Esophagus muscularis mucosa (tissue), 4 donors: ENCODE measurements at regions of chr19 and their contacts with region 1.

Region 1: DNA sequence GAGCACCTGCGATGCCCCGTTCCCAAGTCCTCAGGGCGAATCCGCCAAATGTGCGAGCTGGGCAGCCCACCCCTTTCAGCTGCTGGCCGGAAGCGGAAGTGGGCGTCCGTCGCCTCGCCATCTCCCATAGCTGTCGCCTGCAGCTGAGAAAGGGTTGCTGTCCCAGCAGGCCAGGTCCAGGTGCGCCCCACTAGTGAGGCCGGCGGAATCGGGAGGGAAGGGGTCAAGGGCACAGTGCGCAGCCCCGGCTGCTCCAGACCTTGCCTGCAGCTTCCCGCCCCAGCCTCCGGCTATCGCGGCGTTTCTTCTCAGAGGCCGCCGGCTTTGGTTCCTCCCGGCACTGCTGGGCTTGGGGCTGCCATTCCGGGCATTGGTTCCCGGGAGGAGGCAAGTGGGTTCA is at the start of gene ZNF177:
- DNase-seq: no peak
- H3K4me3 ChIP-seq: peak within 1 kb of the TSS; percentile 23 to 39 (median 30)
- H3K27ac ChIP-seq: no peak within 1 kb of the TSS
- H3K4me1 ChIP-seq: peaks cover 0 to 8% (median 3%) of the 10 kb centered on the region in 4 donors
- H3K27me3 ChIP-seq: peaks cover 0 to 5% (median 0%) of the 10 kb centered on the region in 4 donors
- CTCF ChIP-seq: no peak
- EP300 ChIP-seq: no peak
- POLR2A ChIP-seq: no peak
- total RNA-seq, gene ZNF177: 2.1 to 4.5 (median 3.0) TPM

Region 2: GRCh38 chr19:9289231-9289884 is 73.5 kb before region 1 on chr19:
- intact Hi-C with region 1: loop called (anchors 10 kb)
- DNase-seq: no peak
- H3K4me3 ChIP-seq: no peak overlapping the region
- H3K27ac ChIP-seq: no peak overlapping the region
- H3K4me1 ChIP-seq: no peaks in the 10 kb centered on the region
- H3K27me3 ChIP-seq: no peaks in the 10 kb centered on the region
- CTCF ChIP-seq: no peak
- EP300 ChIP-seq: no peak
- POLR2A ChIP-seq: no peak